ENCODE measurements at regions of chr9 and their contacts with region 1.

Region 1: GRCh38 chr9:125255781-125256391 is 5.7 kb upstream of the GAPVD1 start:
- DNase-seq: no peak
- ATAC-seq: peak; percentile 38 to 44

Region 2: GRCh38 chr9:125003332-125003731 is 252.6 kb before region 1 on chr9:
- intact Hi-C with region 1: no loop called
- DNase-seq: no peak
- ATAC-seq: no peak

Region 3: GRCh38 chr9:125099816-125100215 is 156.1 kb before region 1 on chr9:
- intact Hi-C with region 1: no loop called
- DNase-seq: no peak
- ATAC-seq: no peak

Region 4: GRCh38 chr9:125317704-125318103 is 61.8 kb after region 1 on chr9:
- intact Hi-C with region 1: no loop called
- DNase-seq: no peak
- ATAC-seq: no peak

Region 5: DNA sequence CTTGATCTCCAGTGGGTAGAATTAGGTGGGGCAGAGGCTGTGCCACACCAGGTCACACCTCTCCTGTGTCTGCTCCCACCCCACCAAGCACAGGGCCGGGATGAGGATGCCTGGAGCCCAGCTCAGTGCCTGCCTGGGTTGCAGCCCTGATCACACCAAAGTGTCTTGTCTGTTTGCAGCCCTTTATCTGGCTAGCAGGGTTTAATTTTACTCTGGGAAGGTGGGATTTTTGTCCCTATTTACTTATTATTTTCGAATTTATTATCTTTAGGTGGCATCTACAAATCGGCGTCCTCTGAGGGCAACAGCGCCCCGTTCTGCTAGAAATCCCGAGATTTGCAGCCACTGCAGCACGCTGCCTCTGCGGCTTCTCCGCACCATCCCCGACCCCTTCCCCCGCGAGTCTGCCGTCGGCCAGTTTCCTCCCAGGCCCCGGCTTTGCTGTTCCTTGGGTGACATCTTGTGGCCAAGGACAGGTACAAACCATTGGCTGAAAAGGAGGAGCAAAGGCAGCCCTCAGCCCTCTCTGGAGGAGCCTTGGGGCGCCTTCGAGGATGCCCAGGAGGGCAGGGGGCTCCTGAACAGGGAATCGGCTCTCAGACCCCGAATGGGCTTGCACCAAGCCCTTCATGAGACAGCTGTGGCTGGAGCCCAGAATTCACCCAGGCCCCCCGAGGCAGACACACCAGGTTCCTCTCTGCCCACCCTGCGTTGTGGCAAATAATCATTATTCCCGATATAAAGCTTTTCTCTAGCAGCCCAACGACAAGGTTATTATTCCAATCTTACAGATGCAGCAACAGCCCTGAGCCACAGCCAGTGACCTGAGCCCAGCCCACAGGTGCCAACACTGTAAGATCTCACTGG is 118.8 kb after region 1 on chr9:
- intact Hi-C with region 1: loop called (anchors 10 kb)
- DNase-seq: peak; percentile 65
- ATAC-seq: peak; percentile 82 to 90

Measured in left cardiac atrium (tissue), 4 donors.